ENCODE measurements at regions of chr20 and their contacts with region 1.

Region 1: DNA sequence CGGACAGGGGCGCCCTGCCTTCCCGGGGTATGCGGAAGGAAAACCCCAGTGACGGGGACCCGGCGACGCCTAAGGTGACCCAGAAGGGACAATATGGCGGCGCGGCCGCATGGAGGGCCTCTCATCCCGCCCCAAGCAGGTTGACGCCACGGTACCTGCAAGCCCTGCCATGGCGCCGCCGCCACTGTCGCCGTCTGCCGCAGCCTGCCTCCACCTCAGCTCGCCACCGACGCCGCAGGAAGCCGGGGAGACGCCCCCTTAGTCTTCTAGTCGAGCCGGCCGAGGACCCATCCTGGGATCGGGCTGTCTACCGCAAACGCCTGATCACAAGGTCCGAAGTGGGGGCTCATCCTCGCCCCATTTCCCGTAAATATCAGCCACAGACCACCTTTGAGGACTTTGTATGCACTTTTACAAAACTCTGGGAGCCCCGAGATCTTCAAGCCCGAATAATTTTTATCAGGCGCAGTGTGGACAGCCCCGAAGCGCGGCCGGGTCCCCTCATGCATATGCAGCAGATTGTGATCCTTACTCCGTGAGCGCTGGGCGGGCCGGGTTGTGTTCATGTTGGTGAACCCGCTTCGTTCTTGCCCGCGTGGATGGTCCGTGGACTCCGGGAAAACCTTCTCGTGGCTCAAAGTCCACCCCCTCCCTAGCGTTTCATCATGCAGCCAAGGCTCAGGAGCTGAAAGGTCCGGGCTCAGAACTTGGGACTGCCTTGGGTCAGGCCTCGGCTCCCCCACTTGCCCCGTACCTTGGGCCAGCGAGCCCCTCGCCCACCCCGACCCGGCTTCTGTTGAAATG is at the start of gene BLCAP:
- DNase-seq: peak; percentile 97
- total RNA-seq, gene BLCAP: 48.1 to 55.4 TPM

Region 2: DNA sequence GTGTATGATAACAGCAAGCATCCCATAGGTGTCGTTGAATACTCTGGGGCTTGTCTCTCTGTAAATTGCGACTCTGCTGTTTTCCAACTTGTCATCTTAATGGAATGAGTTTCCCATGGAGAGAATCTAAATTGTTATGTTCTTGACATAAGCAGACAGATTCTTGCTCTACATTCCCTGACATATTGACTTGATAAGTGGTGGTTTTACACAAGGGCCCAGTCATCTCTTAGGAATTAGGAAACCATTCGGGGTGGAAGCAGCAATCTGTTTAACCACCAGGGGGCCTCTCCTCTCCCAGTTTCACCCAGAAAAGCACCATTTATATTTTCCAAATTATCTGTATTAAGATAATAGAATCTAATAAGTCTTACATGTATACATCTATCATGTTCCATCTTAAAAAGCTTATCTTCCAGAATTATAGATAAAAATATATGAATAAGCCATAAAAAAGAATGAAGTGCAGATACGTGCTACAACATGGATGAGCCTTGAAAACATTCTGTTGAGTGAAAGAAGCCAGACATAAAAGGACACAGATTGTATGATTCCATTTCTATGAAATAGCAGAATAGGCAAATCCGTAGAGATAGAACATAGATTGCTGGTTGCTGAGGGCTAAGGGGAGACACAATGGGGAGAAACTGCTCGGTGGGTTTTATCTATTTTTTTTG is 325.4 kb before region 1 on chr20:
- intact Hi-C with region 1: loop called (anchors 5 kb)
- DNase-seq: no peak

Region 3: GRCh38 chr20:37384683-37385174 is 143.1 kb before region 1 on chr20:
- intact Hi-C with region 1: loop called in 1 of 2 experiments (anchors 5 kb)
- DNase-seq: peak; percentile 91

Region 4: GRCh38 chr20:37392421-37393178 is 135.2 kb before region 1 on chr20:
- intact Hi-C with region 1: loop called in 1 of 2 experiments (anchors 5 kb)
- DNase-seq: no peak